Heart left ventricle (tissue), 16 donors: ENCODE measurements at regions of chr22 and their contacts with region 1.

Region 1: DNA sequence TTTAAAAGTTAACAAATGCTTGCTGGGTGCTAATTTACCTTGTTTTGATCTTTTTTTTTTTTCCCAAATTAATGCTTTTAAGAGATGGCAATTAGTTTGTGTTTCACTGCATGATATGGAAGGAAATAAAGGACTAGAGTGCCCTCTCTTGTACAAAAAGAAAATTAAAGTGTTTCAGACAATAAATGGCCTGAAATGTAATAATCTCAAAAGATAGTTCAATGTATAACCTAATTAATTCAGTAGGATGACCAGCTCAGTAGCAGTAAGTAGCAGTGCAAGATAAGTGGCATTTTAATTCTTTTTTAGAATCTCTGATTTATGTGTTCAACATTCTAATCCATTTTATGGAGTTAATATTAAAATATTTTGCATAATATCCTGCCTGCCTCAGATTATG is 39.9 kb upstream of the MYO18B start:
- DNase-seq: no peak
- ATAC-seq: peak in 2 of 4 donors; percentile 47 to 48
- H3K4me3 ChIP-seq: peak overlapping the region in 1 of 12 donors; percentile 21
- H3K27ac ChIP-seq: no peak overlapping the region
- H3K4me1 ChIP-seq: peaks cover 0 to 20% (median 15%) of the 10 kb centered on the region in 12 donors
- H3K27me3 ChIP-seq: no peaks in the 10 kb centered on the region
- CTCF ChIP-seq: peak in 11 of 12 donors; percentile 24 to 63 (median 54)
- POLR2A ChIP-seq: no peak

Region 2: GRCh38 chr22:25362215-25362882 is 339.7 kb before region 1 on chr22:
- intact Hi-C with region 1: loop called in 2 of 10 experiments (anchors 10 kb)
- DNase-seq: peak; percentile 61 to 84 (median 67)
- ATAC-seq: peak in 3 of 4 donors; percentile 54 to 65 (median 57)
- H3K4me3 ChIP-seq: no peak overlapping the region
- H3K27ac ChIP-seq: peak overlapping the region in 1 of 12 donors; percentile 27
- H3K4me1 ChIP-seq: peaks cover 0 to 47% (median 26%) of the 10 kb centered on the region in 12 donors
- H3K27me3 ChIP-seq: no peaks in the 10 kb centered on the region
- CTCF ChIP-seq: peak; percentile 75 to 94 (median 86)
- POLR2A ChIP-seq: no peak

Region 3: GRCh38 chr22:25447686-25448434 is 254.2 kb before region 1 on chr22:
- intact Hi-C with region 1: loop called in 3 of 10 experiments (anchors 5 kb)
- DNase-seq: peak; percentile 88 to 97 (median 92)
- ATAC-seq: peak; percentile 91 to 97 (median 95)
- H3K4me3 ChIP-seq: peak overlapping the region; percentile 38 to 95 (median 72)
- H3K27ac ChIP-seq: peak overlapping the region; percentile 28 to 86 (median 78)
- H3K4me1 ChIP-seq: peaks cover 0 to 45% (median 24%) of the 10 kb centered on the region in 12 donors
- H3K27me3 ChIP-seq: no peaks in the 10 kb centered on the region
- CTCF ChIP-seq: peak; percentile 78 to 99 (median 92)
- POLR2A ChIP-seq: peak in 1 of 2 donors; percentile 65

Region 4: GRCh38 chr22:25465949-25466348 is 236.1 kb before region 1 on chr22:
- intact Hi-C with region 1: loop called (anchors 1 to 5 kb)
- DNase-seq: no peak
- ATAC-seq: no peak
- H3K4me3 ChIP-seq: no peak overlapping the region
- H3K27ac ChIP-seq: no peak overlapping the region
- H3K4me1 ChIP-seq: peaks cover 0 to 5% (median 0%) of the 10 kb centered on the region in 12 donors
- H3K27me3 ChIP-seq: no peaks in the 10 kb centered on the region
- CTCF ChIP-seq: no peak
- POLR2A ChIP-seq: no peak

Region 5: DNA sequence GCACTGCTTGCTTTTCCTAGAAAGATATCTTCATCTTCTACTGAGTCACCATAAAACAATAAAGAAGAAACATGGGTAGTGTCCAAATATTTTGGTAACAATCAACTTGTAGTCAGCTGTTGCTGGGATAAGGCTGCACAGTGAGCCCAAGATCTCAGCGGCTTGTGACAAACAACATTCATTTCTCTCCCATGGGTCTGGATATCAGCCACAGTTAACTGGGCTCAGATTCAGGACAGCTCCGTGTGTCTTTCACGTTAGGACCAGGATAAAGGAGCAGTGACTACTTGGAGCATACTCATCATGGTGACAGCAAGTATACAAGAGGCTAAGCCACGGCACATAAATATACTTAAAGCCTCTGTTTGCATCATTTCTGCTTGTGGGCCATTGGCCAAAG is 165.5 kb before region 1 on chr22:
- intact Hi-C with region 1: loop called in 2 of 10 experiments (anchors 5 to 10 kb)
- DNase-seq: peak in 1 of 5 donors; percentile 46
- ATAC-seq: peak; percentile 73 to 89 (median 81)
- H3K4me3 ChIP-seq: no peak overlapping the region
- H3K27ac ChIP-seq: peak overlapping the region in 1 of 12 donors; percentile 18
- H3K4me1 ChIP-seq: peaks cover 0 to 12% (median 0%) of the 10 kb centered on the region in 12 donors
- H3K27me3 ChIP-seq: no peaks in the 10 kb centered on the region
- CTCF ChIP-seq: no peak
- POLR2A ChIP-seq: no peak

Region 6: GRCh38 chr22:25546751-25547150 is 155.3 kb before region 1 on chr22:
- intact Hi-C with region 1: loop called in 4 of 10 experiments (anchors 2 to 10 kb)
- DNase-seq: no peak
- ATAC-seq: peak in 3 of 4 donors; percentile 13 to 19 (median 16)
- H3K4me3 ChIP-seq: no peak overlapping the region
- H3K27ac ChIP-seq: peak overlapping the region in 1 of 12 donors; percentile 50
- H3K4me1 ChIP-seq: peaks cover 0 to 27% (median 0%) of the 10 kb centered on the region in 12 donors
- H3K27me3 ChIP-seq: no peaks in the 10 kb centered on the region
- CTCF ChIP-seq: no peak
- POLR2A ChIP-seq: no peak

Region 7: DNA sequence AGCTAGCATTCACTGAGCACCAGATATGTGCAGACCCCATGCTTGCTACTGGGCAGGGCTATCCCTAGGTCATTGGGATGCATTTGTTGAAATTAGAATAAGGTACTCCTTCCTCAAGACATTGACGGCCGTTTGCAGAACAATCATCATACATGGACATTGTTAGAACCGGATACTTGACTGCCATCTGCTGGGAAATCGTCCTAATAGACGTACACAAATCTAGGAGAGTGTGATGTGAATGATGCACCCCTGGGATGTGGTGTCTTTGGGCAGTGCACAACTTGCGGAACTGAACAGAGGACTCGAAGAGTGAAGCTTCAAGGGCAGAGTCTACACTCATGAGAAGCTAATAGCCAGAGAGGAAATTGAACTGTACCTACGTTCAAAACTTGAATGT is 75.8 kb after region 1 on chr22:
- intact Hi-C with region 1: loop called in 4 of 10 experiments (anchors 5 to 10 kb)
- DNase-seq: no peak
- ATAC-seq: no peak
- H3K4me3 ChIP-seq: no peak overlapping the region
- H3K27ac ChIP-seq: no peak overlapping the region
- H3K4me1 ChIP-seq: peaks cover 0 to 8% (median 0%) of the 10 kb centered on the region in 12 donors
- H3K27me3 ChIP-seq: no peaks in the 10 kb centered on the region
- CTCF ChIP-seq: peak in 6 of 12 donors; percentile 19 to 39 (median 23)
- POLR2A ChIP-seq: no peak